ENCODE measurements at regions of chr6 and their contacts with region 1.

Region 1: GRCh38 chr6:48486876-48487275 is 375.9 kb upstream of the PTCHD4 start:
- H3K4me3 Mint-ChIP-seq: no peak overlapping the region
- H3K27ac Mint-ChIP-seq: no peak overlapping the region
- H3K4me1 Mint-ChIP-seq: no peaks in the 10 kb centered on the region
- H3K27me3 Mint-ChIP-seq: no peaks in the 10 kb centered on the region

Region 2: GRCh38 chr6:48505621-48506020 is 18.7 kb after region 1 on chr6:
- intact Hi-C with region 1: loop called (anchors 1 kb)
- H3K4me3 Mint-ChIP-seq: no peak overlapping the region
- H3K27ac Mint-ChIP-seq: no peak overlapping the region
- H3K4me1 Mint-ChIP-seq: no peaks in the 10 kb centered on the region
- H3K27me3 Mint-ChIP-seq: no peaks in the 10 kb centered on the region

Measured in dendritic cell treated with granulocyte-macrophage colony-stimulating factor and Interleukin-4, amounts not matched to agents 40 ng/mL and 50 ng/mL, for 4 days (primary cell).